A549 (cell line): ENCODE measurements at regions of chr7 and their contacts with region 1.

Region 1: DNA sequence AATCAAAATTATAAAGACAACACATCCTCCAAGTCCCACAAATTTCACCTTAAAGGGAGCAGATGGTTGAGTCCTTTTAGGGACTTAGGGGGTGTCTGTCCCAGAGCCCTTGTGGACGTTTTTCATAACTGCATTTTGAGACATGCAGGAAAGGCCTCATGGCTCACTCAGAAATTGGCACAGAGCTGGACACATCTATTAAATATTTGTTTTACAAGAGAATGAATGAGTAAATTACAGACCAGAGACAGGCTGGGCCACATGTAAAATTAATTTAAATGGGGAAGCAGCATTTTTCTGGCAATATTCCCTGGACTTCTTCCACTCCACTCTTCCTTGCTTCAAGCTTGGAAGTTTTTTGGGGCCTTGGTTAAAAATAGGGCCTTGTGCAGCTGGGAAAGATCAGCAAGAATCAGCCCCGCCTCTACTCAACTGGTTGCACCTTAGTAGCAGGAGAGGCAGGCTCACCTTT is 20.0 kb downstream of the LAMB1 start:
- DNase-seq: peak; percentile 24 to 25
- ATAC-seq: peak; percentile 68 to 90; a peak in 4 of 6 replicates
- H3K4me3 ChIP-seq: no peak overlapping the region
- H3K27ac ChIP-seq: no peak overlapping the region
- H3K4me1 ChIP-seq: no peaks in the 10 kb centered on the region
- CTCF ChIP-seq: no peak
- EP300 ChIP-seq: no peak
- POLR2A ChIP-seq: no peak
- RAD21 ChIP-seq: no peak

Region 2: GRCh38 chr7:108002726-108003598 is 20.0 kb after region 1 on chr7 and contains the start of gene LAMB1:
- CTCF ChIA-PET with region 1: interaction called, 14 read pairs
- POLR2A ChIA-PET with region 1: no interaction called
- DNase-seq: peak; percentile 75 to 78
- ATAC-seq: peak; percentile 64 to 77
- H3K4me3 ChIP-seq: peak within 1 kb of the TSS; percentile 60
- H3K27ac ChIP-seq: peak within 1 kb of the TSS; percentile 86 to 94
- H3K4me1 ChIP-seq: peaks cover 67% of the 10 kb centered on the region
- CTCF ChIP-seq: no peak
- EP300 ChIP-seq: peak in 1 of 2 experiments; percentile 59; a peak in 2 of 5 replicates
- POLR2A ChIP-seq: peak; percentile 69
- RAD21 ChIP-seq: peak in 1 of 2 experiments; percentile 28; a peak in 2 of 5 replicates
- polyA plus RNA-seq, gene LAMB1: 162 and 208 TPM in 2 replicates